ENCODE measurements at regions of chr11 and their contacts with region 1.

Region 1: GRCh38 chr11:208181-208920 is 843 bp downstream of the RIC8A start:
- DNase-seq: no peak
- ATAC-seq: peak; percentile 83
- H3K4me3 ChIP-seq: peak overlapping the region; percentile 99 to 100
- H3K27ac ChIP-seq: peak overlapping the region; percentile 100
- H3K4me1 ChIP-seq: peaks cover 33% of the 10 kb centered on the region
- H3K27me3 ChIP-seq: no peaks in the 10 kb centered on the region
- CTCF ChIP-seq: no peak

Region 2: GRCh38 chr11:236774-237767 is 28.7 kb after region 1 on chr11 and contains the start of gene PSMD13:
- CTCF ChIA-PET with region 1: no interaction called
- POLR2A ChIA-PET with region 1: interaction called, 12 read pairs
- in situ Hi-C with region 1: no loop called
- intact Hi-C with region 1: no loop called
- DNase-seq: no peak
- ATAC-seq: peak; percentile 96
- H3K4me3 ChIP-seq: peak within 1 kb of the TSS; percentile 87 to 98
- H3K27ac ChIP-seq: peak within 1 kb of the TSS; percentile 97
- H3K4me1 ChIP-seq: peaks cover 26% of the 10 kb centered on the region
- H3K27me3 ChIP-seq: no peaks in the 10 kb centered on the region
- CTCF ChIP-seq: no peak
- total RNA-seq, gene PSMD13: 271 TPM

Region 3: GRCh38 chr11:269146-269890 is 61.0 kb after region 1 on chr11:
- CTCF ChIA-PET with region 1: no interaction called
- POLR2A ChIA-PET with region 1: no interaction called
- in situ Hi-C with region 1: no loop called
- intact Hi-C with region 1: no loop called
- DNase-seq: peak; percentile 68
- ATAC-seq: peak; percentile 51
- H3K4me3 ChIP-seq: peak overlapping the region; percentile 35 to 46
- H3K27ac ChIP-seq: peak overlapping the region; percentile 77; the same call in 1 of the 2 replicates
- H3K4me1 ChIP-seq: peaks cover 14% of the 10 kb centered on the region
- H3K27me3 ChIP-seq: no peaks in the 10 kb centered on the region
- CTCF ChIP-seq: no peak

Region 4: DNA sequence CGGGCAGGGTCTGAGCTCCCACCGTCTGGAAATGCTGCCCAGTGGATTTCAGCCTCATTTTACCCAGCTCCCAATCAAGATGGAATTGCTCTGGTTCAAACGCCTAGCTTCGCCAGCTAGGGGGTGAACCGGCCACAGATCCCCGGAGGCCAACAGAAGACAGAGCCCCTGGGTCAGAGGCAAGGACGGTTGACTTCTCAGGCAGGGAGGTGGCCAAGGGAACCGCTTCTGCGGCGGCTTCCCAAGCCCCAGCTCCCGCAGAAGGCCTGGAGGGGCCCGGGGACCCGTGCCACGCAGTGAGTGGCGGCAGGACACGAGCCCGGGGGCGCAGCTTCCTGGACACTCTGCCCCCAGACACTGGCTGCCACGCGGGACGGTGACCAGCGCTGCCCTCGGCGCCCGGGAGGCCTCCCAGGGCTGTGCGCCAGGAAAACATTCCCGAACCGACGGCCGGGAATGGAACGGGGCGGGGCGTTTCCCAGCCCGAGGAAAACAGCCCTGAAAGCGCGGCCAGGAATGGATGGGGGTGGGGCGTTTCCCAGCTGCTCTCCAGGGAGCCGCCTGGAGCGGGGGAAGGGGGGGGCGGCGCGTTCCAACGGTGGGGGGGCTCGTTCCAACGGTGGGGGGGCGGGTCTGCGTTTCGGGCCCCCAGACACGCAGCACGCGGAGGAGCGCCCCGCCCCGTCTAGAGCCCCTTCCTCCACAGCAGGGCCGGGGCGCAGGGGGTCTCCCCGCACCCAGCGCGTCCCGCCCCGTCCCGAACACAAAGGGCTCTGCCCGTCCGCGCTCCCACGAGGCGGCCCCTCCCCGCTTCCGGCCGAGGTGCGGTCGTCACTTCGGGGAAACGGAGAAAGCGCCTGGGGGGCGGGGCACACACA is 147.5 kb after region 1 on chr11:
- CTCF ChIA-PET with region 1: interaction called, 5 read pairs
- POLR2A ChIA-PET with region 1: no interaction called
- in situ Hi-C with region 1: no loop called
- intact Hi-C with region 1: loop called (anchors 10 kb)
- DNase-seq: peak; percentile 51
- ATAC-seq: peak; percentile 91
- H3K4me3 ChIP-seq: peak overlapping the region; percentile 24 to 42
- H3K27ac ChIP-seq: peak overlapping the region; percentile 99
- H3K4me1 ChIP-seq: peaks cover 35% of the 10 kb centered on the region
- H3K27me3 ChIP-seq: no peaks in the 10 kb centered on the region
- CTCF ChIP-seq: no peak

Region 5: DNA sequence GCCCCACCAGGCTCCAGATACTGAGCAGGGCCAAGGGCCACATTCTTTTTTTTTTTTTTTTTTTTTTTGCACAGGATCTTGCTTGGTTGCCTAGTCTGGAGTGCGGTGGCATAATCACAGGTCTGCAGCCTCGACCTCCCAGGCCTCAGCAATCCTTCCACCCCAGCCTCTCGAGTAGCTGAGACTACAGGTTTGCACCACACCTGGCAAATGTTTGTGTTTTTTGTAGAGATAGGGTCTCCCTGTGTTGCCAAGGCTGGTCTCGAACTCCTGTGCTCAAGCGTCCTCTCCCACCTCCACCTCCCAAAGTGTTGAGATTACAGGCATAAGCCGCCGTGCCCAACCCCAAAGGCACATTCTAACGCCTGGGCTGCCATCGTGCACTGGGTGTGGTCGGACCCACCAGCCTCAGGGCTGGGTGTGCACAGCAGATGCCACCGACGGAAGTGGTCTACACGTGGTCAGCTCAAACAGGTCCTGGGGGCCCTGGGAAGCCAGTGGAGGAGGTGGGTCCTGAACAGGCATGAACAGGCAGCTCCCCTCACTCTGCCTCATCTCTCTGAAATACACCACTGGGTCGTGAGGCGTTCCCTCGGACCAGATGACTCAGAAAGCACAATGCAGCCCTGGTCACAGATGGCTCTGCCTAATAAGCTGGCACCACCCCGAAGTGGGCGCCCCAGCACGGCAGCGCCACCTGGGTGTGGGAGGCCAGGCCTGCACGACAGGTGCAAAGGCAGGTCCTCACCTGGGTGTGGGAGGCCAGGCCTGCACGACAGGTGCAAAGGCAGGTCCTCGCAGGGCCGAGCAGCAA is 155.8 kb after region 1 on chr11:
- CTCF ChIA-PET with region 1: no interaction called
- POLR2A ChIA-PET with region 1: interaction called, 10 read pairs
- in situ Hi-C with region 1: no loop called
- intact Hi-C with region 1: loop called (anchors 10 kb)
- DNase-seq: peak; percentile 38
- ATAC-seq: peak; percentile 62
- H3K4me3 ChIP-seq: no peak overlapping the region
- H3K27ac ChIP-seq: no peak overlapping the region
- H3K4me1 ChIP-seq: peaks cover 9% of the 10 kb centered on the region
- H3K27me3 ChIP-seq: no peaks in the 10 kb centered on the region
- CTCF ChIP-seq: peak; percentile 94

Region 6: DNA sequence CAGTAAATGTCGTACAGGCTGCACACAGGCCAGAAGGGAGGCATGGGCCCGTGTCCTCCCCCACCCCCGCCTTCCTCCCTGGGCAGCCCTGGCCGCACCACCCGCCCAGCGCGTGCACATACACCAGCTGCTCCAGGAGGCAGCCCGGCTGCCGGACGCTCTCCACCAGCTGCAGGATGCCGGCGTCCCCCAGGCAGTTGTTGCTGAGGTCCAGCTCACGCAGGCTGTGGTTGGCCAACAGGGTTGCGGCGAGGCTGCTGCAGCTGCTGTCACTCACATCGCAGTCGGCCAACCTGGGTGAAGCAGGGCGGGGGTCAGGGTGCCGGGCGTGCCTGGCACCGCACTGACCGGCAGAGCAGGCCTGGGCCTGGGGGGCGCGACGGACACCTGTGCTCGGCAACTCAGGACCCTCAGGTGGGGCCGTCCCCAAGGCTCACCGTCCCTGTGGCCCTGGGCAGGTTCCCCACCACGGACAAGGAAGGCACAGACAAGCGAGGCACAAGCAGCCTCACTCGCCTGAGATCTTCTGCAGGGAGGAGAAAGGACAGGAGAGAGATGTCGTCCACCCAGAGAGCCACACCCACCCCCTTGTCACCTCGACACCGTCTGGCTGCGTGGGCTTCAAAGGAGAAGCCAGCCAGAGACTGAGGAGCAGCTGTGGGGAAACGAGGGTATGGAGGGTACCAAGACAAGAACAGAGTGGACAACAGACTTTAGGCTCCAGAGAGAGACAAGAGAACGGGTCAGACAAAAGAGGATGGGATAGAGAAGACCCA is 286.6 kb after region 1 on chr11:
- CTCF ChIA-PET with region 1: no interaction called
- POLR2A ChIA-PET with region 1: no interaction called
- in situ Hi-C with region 1: no loop called
- intact Hi-C with region 1: no loop called
- DNase-seq: no peak
- ATAC-seq: peak; percentile 17
- H3K4me3 ChIP-seq: no peak overlapping the region
- H3K27ac ChIP-seq: no peak overlapping the region
- H3K4me1 ChIP-seq: no peaks in the 10 kb centered on the region
- H3K27me3 ChIP-seq: no peaks in the 10 kb centered on the region
- CTCF ChIP-seq: no peak

Measured in Panc1 (cell line).